ENCODE measurements at regions of chr4 and their contacts with region 1.

Region 1: GRCh38 chr4:85747882-85748491 is 273.0 kb downstream of the ARHGAP24 start:
- DNase-seq: peak; percentile 71 to 86 (median 85)
- H3K4me3 ChIP-seq: no peak overlapping the region
- H3K27ac ChIP-seq: no peak overlapping the region
- H3K4me1 ChIP-seq: peaks cover 0 to 2% (median 0%) of the 10 kb centered on the region in 4 experiments
- H3K27me3 ChIP-seq: no peaks in the 10 kb centered on the region

Region 2: DNA sequence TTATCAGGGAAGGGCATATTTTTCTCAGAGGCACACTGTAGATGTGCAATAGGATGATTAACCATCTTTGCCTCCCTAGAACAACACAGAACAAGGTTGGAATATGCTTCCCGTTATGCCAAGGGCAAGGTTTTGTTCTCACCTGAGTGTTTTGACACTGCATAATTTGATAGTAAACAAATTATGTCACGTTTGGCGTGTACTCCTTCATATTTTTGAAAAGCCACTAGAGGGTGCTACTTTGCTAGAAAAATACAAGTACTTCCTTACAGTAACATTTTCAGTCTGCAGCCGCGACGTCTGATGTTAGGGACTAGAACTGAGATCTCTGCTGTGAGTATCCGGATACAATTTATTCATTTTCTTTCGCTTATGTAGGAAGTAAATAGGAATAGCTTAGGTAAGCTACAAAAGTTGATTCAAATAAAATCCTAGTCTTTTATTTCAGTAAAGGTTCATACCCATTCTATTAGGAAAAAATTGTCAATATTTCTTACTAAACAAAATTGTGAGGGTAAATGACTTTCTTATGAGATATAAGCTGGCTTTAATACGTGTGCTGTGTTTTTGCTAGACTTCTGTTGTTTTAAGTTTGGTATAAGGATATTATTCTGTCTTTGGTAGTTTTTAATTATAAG is 600.4 kb before region 1 on chr4:
- CTCF ChIA-PET with region 1: interaction called, 10 read pairs
- POLR2A ChIA-PET with region 1: no interaction called
- DNase-seq: peak; percentile 58 to 73 (median 72)
- H3K4me3 ChIP-seq: no peak overlapping the region
- H3K27ac ChIP-seq: no peak overlapping the region
- H3K4me1 ChIP-seq: no peaks in the 10 kb centered on the region
- H3K27me3 ChIP-seq: no peaks in the 10 kb centered on the region